ENCODE measurements at regions of chr9 and their contacts with region 1.

Region 1: DNA sequence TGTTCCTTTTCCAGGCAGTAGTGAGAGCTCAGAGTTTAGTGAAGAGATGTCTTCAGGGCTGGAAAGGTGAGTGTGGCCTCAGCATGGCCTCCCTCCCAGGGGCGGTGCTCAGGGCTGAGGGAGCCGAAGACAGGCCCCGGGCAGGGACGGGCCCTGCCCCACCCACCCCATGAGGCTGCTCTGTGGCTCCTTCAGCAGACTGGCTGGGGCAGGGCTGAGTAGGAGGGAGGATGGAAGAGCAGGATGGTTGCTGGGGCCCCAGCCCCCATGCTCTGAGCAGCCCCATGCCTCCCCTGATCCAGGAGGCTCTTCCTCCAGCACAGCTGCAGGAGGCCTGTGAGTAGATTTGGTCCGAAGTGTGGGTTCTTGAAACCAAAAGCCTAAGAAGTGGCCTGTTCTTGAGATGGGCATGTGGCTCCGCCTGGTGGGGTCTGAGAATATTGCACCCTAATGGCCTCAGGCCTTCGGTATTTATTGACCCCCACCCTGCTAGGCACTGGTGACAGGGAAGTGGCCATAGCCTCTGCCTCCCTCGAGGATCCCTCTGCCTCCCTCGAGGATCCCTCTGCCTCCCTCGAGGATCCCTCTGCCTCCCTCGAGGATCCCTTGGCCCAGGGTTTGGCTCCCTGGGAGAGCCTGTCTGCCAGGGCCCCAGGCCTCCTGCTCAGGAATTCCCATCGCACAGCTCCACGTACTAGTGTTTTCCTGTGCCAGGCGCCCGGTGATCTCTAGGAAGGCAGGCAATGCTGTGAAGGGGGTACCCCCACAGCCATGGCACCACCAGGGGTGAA is 65.4 kb upstream of the GARNL3 start:
- DNase-seq: peak in 1 of 2 donors; percentile 92
- H3K4me3 ChIP-seq: no peak overlapping the region
- H3K27ac ChIP-seq: no peak overlapping the region
- H3K4me1 ChIP-seq: peaks cover 0 to 11% of the 10 kb centered on the region in 2 donors
- H3K27me3 ChIP-seq: no peaks in the 10 kb centered on the region
- CTCF ChIP-seq: peak; percentile 83 to 98 (median 95)

Region 2: GRCh38 chr9:126860077-126860756 is 339.0 kb before region 1 on chr9 and contains the start of gene ZBTB34:
- intact Hi-C with region 1: loop called (anchors 5 kb)
- DNase-seq: peak in 1 of 2 donors; percentile 82
- H3K4me3 ChIP-seq: peak within 1 kb of the TSS; percentile 97 to 99
- H3K27ac ChIP-seq: peak within 1 kb of the TSS; percentile 90 to 97
- H3K4me1 ChIP-seq: peaks cover 3 to 11% of the 10 kb centered on the region in 2 donors
- H3K27me3 ChIP-seq: no peaks in the 10 kb centered on the region
- CTCF ChIP-seq: peak; percentile 99 to 100 (median 100)
- total RNA-seq, gene ZBTB34: 8.9 TPM

Region 3: DNA sequence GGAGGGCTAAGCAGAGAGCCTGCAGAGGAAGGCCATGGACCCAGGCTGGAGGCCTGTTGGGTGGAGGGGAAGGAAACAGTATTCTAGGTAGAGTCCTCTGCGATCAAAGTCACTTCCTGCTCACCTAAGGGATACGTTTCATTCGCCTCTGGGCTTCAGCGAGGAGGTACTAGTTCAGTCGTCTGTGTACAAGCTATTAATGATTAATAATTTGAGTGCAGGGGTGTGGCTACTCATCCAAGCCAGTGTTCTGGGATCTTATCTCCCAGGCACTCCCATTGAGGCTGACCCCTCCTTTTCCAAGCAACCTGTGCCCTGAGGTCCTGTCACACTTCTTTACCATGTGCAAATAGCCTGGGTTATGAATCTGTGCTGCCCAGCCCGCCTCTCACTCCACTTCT is 259.4 kb before region 1 on chr9:
- intact Hi-C with region 1: loop called (anchors 1 kb)
- DNase-seq: no peak
- H3K4me3 ChIP-seq: no peak overlapping the region
- H3K27ac ChIP-seq: no peak overlapping the region
- H3K4me1 ChIP-seq: no peaks in the 10 kb centered on the region
- H3K27me3 ChIP-seq: no peaks in the 10 kb centered on the region
- CTCF ChIP-seq: no peak

Region 4: DNA sequence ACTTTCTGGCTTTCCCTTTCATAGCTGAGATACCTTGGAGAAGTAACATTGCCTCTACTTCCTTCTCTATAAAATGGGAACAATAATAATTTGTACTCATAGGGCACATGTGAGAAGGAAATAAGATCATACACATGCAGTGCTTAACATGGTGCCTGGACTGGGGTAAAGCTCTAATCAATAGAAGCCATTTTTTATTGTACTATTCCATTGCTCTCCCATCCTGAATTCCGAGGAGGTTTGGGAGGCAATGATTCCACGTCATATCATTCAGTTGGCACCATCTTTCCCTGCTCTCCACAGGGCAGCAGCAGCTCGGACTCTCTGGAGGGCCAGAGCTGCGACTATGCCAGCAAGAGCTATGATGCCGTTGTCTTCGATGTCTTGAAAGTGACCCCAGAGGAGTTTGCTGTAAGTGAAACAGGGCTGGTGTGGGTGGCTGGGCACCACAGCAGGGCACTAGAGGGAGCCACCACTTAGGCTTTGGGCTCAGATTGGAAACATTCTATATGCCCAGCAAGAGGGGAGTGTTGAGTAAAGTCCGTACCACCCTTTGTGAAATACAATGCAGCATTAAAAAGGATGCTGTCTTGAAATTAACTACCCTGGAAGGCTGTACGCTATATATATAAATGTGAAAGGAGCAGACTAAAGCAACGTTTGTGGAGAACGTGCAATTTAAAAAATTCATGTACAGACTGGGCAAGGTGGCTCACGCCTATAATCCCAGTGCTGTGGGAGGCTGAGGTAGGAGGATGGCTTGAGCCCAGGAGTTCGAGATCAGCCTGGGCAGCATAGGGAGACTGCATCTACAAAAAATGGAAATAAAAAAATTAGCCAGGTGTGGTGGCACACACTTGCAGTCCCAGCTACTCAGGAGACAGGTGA is 233.4 kb before region 1 on chr9:
- intact Hi-C with region 1: loop called (anchors 1 kb)
- DNase-seq: no peak
- H3K4me3 ChIP-seq: no peak overlapping the region
- H3K27ac ChIP-seq: no peak overlapping the region
- H3K4me1 ChIP-seq: no peaks in the 10 kb centered on the region
- H3K27me3 ChIP-seq: peaks cover 5% of the 10 kb centered on the region
- CTCF ChIP-seq: peak; percentile 34 to 68 (median 54)

Region 5: DNA sequence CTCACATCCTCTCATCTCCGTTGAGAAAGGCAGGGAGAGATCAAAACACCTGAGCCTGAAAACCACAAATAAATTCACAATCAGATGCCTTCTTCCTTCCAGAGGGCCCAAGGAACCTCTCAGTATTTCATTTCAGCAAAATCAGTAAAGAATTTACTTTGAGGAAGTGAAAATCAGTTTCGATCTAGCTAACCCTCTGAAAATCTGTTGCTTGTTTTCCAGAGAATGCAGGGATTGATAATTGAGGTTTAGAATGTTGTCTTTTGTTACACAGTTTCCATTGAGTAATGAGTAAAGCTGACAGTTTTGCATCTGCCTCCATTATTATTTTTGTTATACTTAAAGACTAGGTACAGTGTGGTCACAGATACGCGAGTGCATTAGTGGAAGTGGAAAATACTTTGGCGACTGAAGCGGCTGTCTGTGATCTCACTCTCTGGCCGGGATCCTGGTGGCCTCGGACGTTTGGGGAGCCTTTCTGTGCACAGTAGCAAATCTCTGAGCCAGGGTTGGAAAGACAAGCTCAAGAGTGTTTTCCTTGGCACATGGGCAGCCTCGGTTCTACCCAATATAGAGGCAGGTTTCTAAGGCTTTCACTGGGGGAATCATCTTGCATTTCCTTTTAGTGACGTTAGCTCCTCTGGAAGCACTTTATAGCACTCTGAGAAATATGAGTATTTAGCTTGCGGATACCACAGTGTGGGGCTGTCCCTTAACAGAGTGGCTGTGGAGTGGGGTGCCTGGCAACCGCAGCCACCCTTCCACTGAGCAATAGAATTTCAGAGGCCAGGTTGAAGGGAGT is 44.6 kb before region 1 on chr9:
- intact Hi-C with region 1: loop called (anchors 2 kb)
- DNase-seq: peak in 1 of 2 donors; percentile 91
- H3K4me3 ChIP-seq: peak overlapping the region in 1 of 2 donors; percentile 46
- H3K27ac ChIP-seq: peak overlapping the region; percentile 57 to 59
- H3K4me1 ChIP-seq: peaks cover 4 to 8% of the 10 kb centered on the region in 2 donors
- H3K27me3 ChIP-seq: no peaks in the 10 kb centered on the region
- CTCF ChIP-seq: peak in 1 of 3 experiments; percentile 24

Measured in ascending aorta (tissue), 2 donors.